Gastrocnemius medialis (tissue), 4 donors: ENCODE measurements at regions of chr20 and their contacts with region 1.

Region 1: GRCh38 chr20:13105864-13106457 is 97.2 kb downstream of the SPTLC3 start:
- DNase-seq: no peak
- ATAC-seq: no peak
- H3K4me3 ChIP-seq: no peak overlapping the region
- H3K27ac ChIP-seq: no peak overlapping the region
- H3K4me1 ChIP-seq: no peaks in the 10 kb centered on the region
- H3K27me3 ChIP-seq: no peaks in the 10 kb centered on the region
- CTCF ChIP-seq: peak in 4 of 5 experiments; percentile 46 to 77 (median 59)
- POLR2A ChIP-seq: no peak

Region 2: DNA sequence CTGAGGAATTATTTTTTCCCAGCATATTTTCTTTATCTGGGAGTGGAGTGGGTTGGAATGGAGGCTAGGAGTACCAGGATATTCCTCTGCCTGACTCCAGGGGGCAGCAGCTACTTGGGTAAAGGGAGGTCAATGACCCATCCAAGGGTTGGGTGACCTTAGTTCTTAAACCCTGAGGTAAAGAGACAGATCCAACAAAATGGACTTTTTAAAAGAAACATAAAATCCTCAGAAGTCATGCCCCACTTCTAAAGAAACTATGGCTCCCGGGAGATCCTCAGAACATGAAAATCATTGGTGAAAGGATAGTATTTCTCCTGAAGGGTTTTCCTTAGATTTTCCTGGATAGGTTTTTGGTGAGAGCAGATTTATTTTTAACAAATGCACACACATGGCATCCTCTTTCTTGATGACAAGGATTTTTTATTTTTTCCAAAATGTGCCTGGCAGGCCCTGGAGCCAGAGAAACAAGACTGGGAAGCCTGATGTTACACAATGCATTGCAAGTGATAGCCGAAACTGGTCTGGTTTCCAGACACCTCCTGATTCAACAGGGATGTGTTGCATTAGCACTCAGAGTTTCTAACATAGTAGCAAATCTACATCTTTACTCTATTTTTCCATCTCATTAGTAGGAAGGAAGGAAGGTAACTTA is 1429.2 kb before region 1 on chr20:
- in situ Hi-C with region 1: loop called in 1 of 4 experiments (anchors 10 kb)
- intact Hi-C with region 1: loop called (anchors 1 kb)
- DNase-seq: no peak
- ATAC-seq: peak in 1 of 2 donors; percentile 78
- H3K4me3 ChIP-seq: no peak overlapping the region
- H3K27ac ChIP-seq: no peak overlapping the region
- H3K4me1 ChIP-seq: no peaks in the 10 kb centered on the region
- H3K27me3 ChIP-seq: no peaks in the 10 kb centered on the region
- CTCF ChIP-seq: peak; percentile 50 to 77 (median 67)
- POLR2A ChIP-seq: no peak

Region 3: GRCh38 chr20:12925214-12925755 is 180.7 kb before region 1 on chr20:
- in situ Hi-C with region 1: loop called in 2 of 4 experiments (anchors 10 kb)
- intact Hi-C with region 1: loop called (anchors 2 kb)
- DNase-seq: no peak
- ATAC-seq: peak in 1 of 2 donors; percentile 45
- H3K4me3 ChIP-seq: no peak overlapping the region
- H3K27ac ChIP-seq: no peak overlapping the region
- H3K4me1 ChIP-seq: no peaks in the 10 kb centered on the region
- H3K27me3 ChIP-seq: no peaks in the 10 kb centered on the region
- CTCF ChIP-seq: peak; percentile 23 to 55 (median 31)
- POLR2A ChIP-seq: no peak

Region 4: GRCh38 chr20:12966468-12967341 is 139.3 kb before region 1 on chr20:
- in situ Hi-C with region 1: no loop called
- intact Hi-C with region 1: loop called (anchors 5 kb)
- DNase-seq: no peak
- ATAC-seq: no peak
- H3K4me3 ChIP-seq: no peak overlapping the region
- H3K27ac ChIP-seq: no peak overlapping the region
- H3K4me1 ChIP-seq: no peaks in the 10 kb centered on the region
- H3K27me3 ChIP-seq: no peaks in the 10 kb centered on the region
- CTCF ChIP-seq: no peak
- POLR2A ChIP-seq: no peak